Dendritic cell treated with granulocyte-macrophage colony-stimulating factor and Interleukin-4, amounts not matched to agents 40 ng/mL and 50 ng/mL, for 4 days (primary cell): ENCODE measurements at regions of chr17 and their contacts with region 1.

Region 1: GRCh38 chr17:49567871-49568694 is 7.6 kb upstream of the NXPH3 start:
- H3K4me3 Mint-ChIP-seq: peak overlapping the region; percentile 68
- H3K27ac Mint-ChIP-seq: peak overlapping the region; percentile 50
- H3K4me1 Mint-ChIP-seq: peaks cover 36% of the 10 kb centered on the region
- H3K27me3 Mint-ChIP-seq: peaks cover 62% of the 10 kb centered on the region

Region 2: GRCh38 chr17:49694847-49695683 is 127.0 kb after region 1 on chr17:
- intact Hi-C with region 1: loop called (anchors 1 kb)
- H3K4me3 Mint-ChIP-seq: peak overlapping the region; percentile 56
- H3K27ac Mint-ChIP-seq: peak overlapping the region; percentile 75
- H3K4me1 Mint-ChIP-seq: peaks cover 66% of the 10 kb centered on the region
- H3K27me3 Mint-ChIP-seq: peaks cover 5% of the 10 kb centered on the region

Region 3: DNA sequence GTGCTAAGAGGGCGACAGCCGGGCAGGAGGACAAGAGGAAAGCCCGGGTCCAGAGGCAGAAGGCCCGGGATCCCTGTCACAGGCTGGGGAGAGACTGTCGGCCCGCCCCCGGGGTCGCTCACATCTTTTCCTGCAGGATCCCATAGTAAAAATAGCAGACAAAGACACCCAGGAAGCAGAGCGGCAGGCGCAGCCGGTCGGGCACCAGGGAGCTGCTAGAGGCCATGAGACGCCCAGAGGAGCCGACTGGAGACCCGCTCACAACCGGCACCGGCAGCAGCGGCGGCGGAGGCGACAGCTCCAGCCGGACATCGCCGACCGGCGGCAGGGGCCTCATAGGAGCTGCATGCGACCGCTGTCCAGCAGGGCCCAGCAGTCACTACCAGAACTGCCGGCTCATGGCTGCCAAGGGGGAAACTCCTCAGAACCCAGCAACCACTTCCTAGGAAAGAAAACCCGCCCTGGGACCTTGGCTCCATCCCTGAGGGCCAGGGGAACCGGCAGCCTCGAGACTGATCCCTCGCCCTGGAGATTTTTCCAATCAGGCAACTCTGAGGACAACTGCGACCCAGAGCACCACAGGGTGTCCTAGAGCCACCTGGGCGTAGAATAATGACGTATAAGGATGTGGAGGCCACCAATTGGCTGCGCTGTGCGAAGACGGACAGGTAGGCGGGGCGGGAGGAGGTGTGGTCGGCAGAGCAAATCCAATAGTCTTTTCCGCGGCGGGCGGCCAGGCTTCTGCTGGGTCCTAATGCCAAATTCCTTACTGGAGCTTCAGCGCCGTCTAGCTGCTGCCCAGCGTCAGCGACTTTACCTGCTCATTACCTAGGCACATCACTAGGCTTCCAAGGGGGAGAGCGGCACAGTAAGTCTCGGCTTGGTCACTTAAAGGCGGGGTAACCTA is 139.8 kb after region 1 on chr17 and contains the start of gene SLC35B1:
- intact Hi-C with region 1: loop called (anchors 2 kb)
- H3K4me3 Mint-ChIP-seq: peak within 1 kb of the TSS; percentile 91
- H3K27ac Mint-ChIP-seq: peak within 1 kb of the TSS; percentile 98
- H3K4me1 Mint-ChIP-seq: peaks cover 38% of the 10 kb centered on the region
- H3K27me3 Mint-ChIP-seq: no peaks in the 10 kb centered on the region

Region 4: DNA sequence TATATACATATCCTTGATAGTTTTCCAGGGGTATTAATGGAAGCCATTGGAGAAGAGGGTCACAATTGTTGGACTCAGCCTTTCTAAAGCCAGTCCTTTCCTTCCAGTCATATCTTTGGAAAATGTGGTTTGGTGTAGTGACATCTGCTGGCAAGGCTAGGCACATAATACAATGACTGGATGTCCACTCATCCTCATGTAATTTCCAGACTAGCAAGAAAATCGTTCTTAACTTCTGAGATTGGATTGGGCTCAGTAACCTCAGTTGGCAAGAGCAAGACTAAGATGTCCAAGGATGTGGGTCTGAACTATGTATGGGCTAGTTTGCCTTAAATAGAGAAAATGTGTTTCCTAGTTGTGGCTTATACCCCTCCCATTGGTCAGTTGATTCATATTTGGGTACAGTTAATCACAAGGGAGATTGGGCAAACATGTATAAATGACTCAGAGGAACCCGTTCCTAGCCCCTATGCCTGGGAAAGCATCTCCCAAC is 211.7 kb after region 1 on chr17:
- intact Hi-C with region 1: loop called (anchors 2 kb)
- H3K4me3 Mint-ChIP-seq: no peak overlapping the region
- H3K27ac Mint-ChIP-seq: no peak overlapping the region
- H3K4me1 Mint-ChIP-seq: peaks cover 10% of the 10 kb centered on the region
- H3K27me3 Mint-ChIP-seq: peaks cover 2% of the 10 kb centered on the region

Region 5: DNA sequence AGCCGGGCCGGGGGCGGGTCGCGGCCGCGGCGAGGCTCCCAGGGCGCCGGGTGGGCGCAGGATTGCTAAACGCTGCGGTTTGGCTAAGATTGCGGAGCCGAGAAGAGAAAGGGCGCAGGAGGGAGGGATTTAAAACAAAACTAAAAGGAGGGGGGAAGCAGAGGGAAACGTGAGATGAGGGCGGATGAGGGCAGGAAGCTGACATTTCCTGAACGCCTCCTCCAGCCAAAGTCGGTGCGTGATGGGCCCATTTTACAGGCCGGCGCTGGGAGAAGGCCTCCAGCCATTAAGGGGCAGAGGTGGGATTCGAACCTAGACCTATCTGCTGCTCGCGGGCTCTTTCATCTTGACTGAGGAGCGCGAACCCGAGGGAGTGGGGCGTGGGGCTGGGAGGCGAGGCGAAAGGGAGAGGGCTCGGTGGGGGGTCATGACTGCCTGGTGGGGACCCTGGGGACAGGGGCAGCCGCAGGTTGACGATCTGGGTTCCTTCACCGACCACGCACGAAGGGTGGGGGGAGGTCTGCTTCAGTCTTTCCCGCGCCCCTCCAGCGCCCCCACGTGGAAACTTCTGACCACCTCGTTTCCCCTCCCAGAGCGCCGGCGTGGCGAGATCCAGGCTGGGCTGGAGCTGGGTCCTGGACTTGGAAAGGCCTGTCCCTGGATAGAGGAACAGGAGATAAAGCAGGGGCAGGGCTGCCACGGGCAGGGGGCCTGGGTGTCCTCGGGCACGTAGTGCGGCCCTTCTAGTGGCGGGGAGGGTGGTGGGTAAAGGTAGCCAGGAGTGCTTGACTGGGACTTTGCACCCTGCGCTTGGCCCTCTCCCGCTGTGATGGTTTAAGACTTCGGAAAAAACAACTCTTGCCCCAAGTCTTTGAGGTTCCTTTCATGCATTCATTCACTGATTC is 283.6 kb after region 1 on chr17:
- intact Hi-C with region 1: loop called (anchors 5 kb)
- H3K4me3 Mint-ChIP-seq: peak overlapping the region; percentile 83
- H3K27ac Mint-ChIP-seq: peak overlapping the region; percentile 80
- H3K4me1 Mint-ChIP-seq: peaks cover 18% of the 10 kb centered on the region
- H3K27me3 Mint-ChIP-seq: peaks cover 46% of the 10 kb centered on the region

Region 6: GRCh38 chr17:49862781-49863331 is 294.8 kb after region 1 on chr17:
- intact Hi-C with region 1: no loop called
- H3K4me3 Mint-ChIP-seq: no peak overlapping the region
- H3K27ac Mint-ChIP-seq: no peak overlapping the region
- H3K4me1 Mint-ChIP-seq: peaks cover 26% of the 10 kb centered on the region
- H3K27me3 Mint-ChIP-seq: peaks cover 33% of the 10 kb centered on the region

Region 7: GRCh38 chr17:49997791-49998703 is 430.0 kb after region 1 on chr17:
- intact Hi-C with region 1: loop called (anchors 5 kb)
- H3K4me3 Mint-ChIP-seq: no peak overlapping the region
- H3K27ac Mint-ChIP-seq: no peak overlapping the region
- H3K4me1 Mint-ChIP-seq: peaks cover 28% of the 10 kb centered on the region
- H3K27me3 Mint-ChIP-seq: peaks cover 77% of the 10 kb centered on the region